ENCODE measurements at regions of chr11 and their contacts with region 1.

Region 1: DNA sequence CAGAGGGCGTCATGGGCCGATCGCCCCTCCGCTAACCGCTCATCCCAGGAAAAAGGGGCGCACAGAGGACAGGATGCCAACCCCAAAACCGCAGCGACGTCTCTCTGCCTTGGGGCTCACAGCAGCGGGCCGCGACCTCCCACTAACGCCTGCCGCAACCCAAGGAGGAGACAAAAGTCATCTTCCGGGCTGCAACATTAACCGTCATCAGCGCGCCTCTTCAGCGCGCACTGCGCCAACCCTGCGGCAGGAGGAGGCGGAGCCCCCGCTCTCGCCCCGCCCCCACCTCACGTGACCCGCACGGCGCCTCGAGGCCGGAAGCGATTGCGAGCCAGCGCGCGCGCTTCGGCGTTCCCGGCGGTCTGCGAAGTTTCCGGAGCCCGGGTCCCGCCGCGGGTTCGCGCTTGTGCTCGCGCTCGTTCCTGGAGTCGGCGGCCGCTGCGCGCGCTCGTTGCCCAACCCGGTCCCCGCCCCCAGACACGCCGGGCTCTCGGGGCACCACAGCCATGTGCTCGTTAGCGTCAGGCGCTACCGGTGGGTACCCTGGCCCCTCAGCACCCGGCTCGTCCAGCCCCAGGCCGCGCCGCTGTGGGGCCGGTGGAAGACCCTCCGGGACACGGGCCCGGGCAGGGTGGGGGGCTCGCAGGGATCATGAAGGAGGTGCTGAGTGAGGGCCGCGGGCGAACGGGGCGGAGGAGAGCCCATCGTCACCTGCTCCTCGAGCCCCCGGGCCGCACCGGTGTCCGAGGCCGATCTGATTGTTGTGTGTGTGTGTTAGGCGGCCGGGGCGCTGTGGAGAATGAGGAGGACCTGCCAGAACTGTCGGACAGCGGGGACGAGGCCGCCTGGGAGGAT is at the start of gene PRMT3:
- DNase-seq: peak; percentile 94
- H3K4me3 Mint-ChIP-seq: peak within 1 kb of the TSS; percentile 87
- H3K27ac Mint-ChIP-seq: peak within 1 kb of the TSS; percentile 97
- H3K4me1 Mint-ChIP-seq: no peaks in the 10 kb centered on the region
- H3K27me3 Mint-ChIP-seq: no peaks in the 10 kb centered on the region
- CTCF ChIP-seq: peak; percentile 96
- total RNA-seq, gene PRMT3: 45.1 and 60.1 TPM in 2 replicates

Region 2: DNA sequence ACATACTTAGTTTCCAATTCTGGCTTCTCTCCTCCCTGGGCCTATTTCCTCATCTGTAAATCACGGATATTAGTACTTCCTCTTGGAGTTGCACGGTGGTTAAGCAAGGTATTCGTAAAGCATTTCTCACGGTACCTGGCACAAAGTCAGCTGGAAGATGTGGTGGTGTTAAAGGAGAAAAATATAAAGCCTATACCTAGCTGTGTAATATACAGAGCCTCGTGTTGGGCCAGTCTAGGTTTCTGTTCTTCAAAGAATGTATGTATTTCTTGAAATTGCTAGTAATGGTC is 274.4 kb before region 1 on chr11:
- CTCF ChIA-PET with region 1: no interaction called
- POLR2A ChIA-PET with region 1: no interaction called
- intact Hi-C with region 1: no loop called
- DNase-seq: peak; percentile 66
- H3K4me3 Mint-ChIP-seq: peak overlapping the region; percentile 23
- H3K27ac Mint-ChIP-seq: peak overlapping the region; percentile 49
- H3K4me1 Mint-ChIP-seq: peaks cover 50% of the 10 kb centered on the region
- H3K27me3 Mint-ChIP-seq: no peaks in the 10 kb centered on the region
- CTCF ChIP-seq: no peak

Region 3: GRCh38 chr11:20374746-20375300 is 12.6 kb before region 1 on chr11:
- CTCF ChIA-PET with region 1: interaction called, 12 read pairs
- POLR2A ChIA-PET with region 1: interaction called, 5 read pairs
- intact Hi-C with region 1: no loop called
- DNase-seq: peak; percentile 41
- H3K4me3 Mint-ChIP-seq: no peak overlapping the region
- H3K27ac Mint-ChIP-seq: peak overlapping the region; percentile 92
- H3K4me1 Mint-ChIP-seq: peaks cover 15% of the 10 kb centered on the region
- H3K27me3 Mint-ChIP-seq: no peaks in the 10 kb centered on the region
- CTCF ChIP-seq: no peak

Region 4: GRCh38 chr11:20854215-20854955 is 466.9 kb after region 1 on chr11:
- CTCF ChIA-PET with region 1: no interaction called
- POLR2A ChIA-PET with region 1: no interaction called
- intact Hi-C with region 1: no loop called
- DNase-seq: no peak
- H3K4me3 Mint-ChIP-seq: no peak overlapping the region
- H3K27ac Mint-ChIP-seq: no peak overlapping the region
- H3K4me1 Mint-ChIP-seq: no peaks in the 10 kb centered on the region
- H3K27me3 Mint-ChIP-seq: no peaks in the 10 kb centered on the region
- CTCF ChIP-seq: no peak